Activated CD4-positive, alpha-beta T cell treated with anti-CD3 and anti-CD28 coated beads, Interleukin-2, amount 10 ng/mL, durations not matched to agents 24 days and 14 days (primary cell): ENCODE measurements at regions of chr12 and their contacts with region 1.

Region 1: GRCh38 chr12:120495723-120496412 is at the start of gene DYNLL1:
- DNase-seq: peak; percentile 100
- H3K4me3 Mint-ChIP-seq: peak within 1 kb of the TSS; percentile 94
- H3K27ac Mint-ChIP-seq: peak within 1 kb of the TSS; percentile 82
- H3K4me1 Mint-ChIP-seq: peaks cover 31% of the 10 kb centered on the region
- H3K27me3 Mint-ChIP-seq: no peaks in the 10 kb centered on the region
- total RNA-seq, gene DYNLL1: 330 and 351 TPM in 2 replicates

Region 2: DNA sequence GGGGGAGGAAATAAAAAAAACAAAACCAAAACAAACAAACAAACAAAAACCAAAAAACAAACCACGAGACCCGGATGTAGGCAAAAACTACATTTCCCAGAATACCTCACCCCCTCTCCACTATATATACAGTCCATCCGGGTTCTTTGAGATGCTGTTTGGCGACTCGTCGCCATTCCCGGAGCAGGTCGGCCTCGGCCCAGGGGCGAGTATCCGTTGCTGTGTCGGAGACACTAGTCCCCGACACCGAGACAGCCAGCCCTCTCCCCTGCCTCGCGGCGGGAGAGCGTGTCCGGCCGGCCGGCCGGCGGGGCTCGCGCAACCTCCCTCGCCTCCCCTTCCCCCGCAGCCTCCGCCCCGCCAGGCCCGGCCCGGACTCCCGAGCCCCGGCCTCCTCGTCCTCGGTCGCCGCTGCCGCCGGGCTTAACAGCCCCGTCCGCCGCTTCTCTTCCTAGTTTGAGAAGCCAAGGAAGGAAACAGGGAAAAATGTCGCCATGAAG is 38.4 kb after region 1 on chr12 and contains the start of gene RNF10:
- intact Hi-C with region 1: loop called (anchors 2 kb)
- DNase-seq: peak; percentile 94
- H3K4me3 Mint-ChIP-seq: peak within 1 kb of the TSS; percentile 96
- H3K27ac Mint-ChIP-seq: peak within 1 kb of the TSS; percentile 96
- H3K4me1 Mint-ChIP-seq: peaks cover 45% of the 10 kb centered on the region
- H3K27me3 Mint-ChIP-seq: no peaks in the 10 kb centered on the region
- total RNA-seq, gene RNF10: 153 and 160 TPM in 2 replicates